ENCODE measurements at regions of chr9 and their contacts with region 1.

Region 1: GRCh38 chr9:131423171-131423581 is 29.3 kb downstream of the PRRC2B start:
- DNase-seq: peak; percentile 91
- H3K4me3 ChIP-seq: no peak overlapping the region
- H3K27ac ChIP-seq: peak overlapping the region; percentile 89
- H3K4me1 ChIP-seq: peaks cover 42% of the 10 kb centered on the region
- H3K27me3 ChIP-seq: no peaks in the 10 kb centered on the region
- CTCF ChIP-seq: no peak
- POLR2A ChIP-seq: no peak

Region 2: GRCh38 chr9:130073373-130073772 is 1349.8 kb before region 1 on chr9:
- CTCF ChIA-PET with region 1: no interaction called
- POLR2A ChIA-PET with region 1: no interaction called
- dilution Hi-C with region 1: no loop called
- intact Hi-C with region 1: no loop called
- DNase-seq: peak; percentile 94
- H3K4me3 ChIP-seq: no peak overlapping the region
- H3K27ac ChIP-seq: peak overlapping the region; percentile 88
- H3K4me1 ChIP-seq: peaks cover 33% of the 10 kb centered on the region
- H3K27me3 ChIP-seq: no peaks in the 10 kb centered on the region
- CTCF ChIP-seq: no peak
- POLR2A ChIP-seq: no peak

Region 3: GRCh38 chr9:131407717-131408195 is 15.4 kb before region 1 on chr9:
- CTCF ChIA-PET with region 1: interaction called, 10 read pairs
- POLR2A ChIA-PET with region 1: no interaction called
- dilution Hi-C with region 1: no loop called
- intact Hi-C with region 1: loop called (anchors 1 kb)
- DNase-seq: peak; percentile 63
- H3K4me3 ChIP-seq: no peak overlapping the region
- H3K27ac ChIP-seq: peak overlapping the region; percentile 33
- H3K4me1 ChIP-seq: peaks cover 46% of the 10 kb centered on the region
- H3K27me3 ChIP-seq: no peaks in the 10 kb centered on the region
- CTCF ChIP-seq: peak; percentile 22 to 35
- POLR2A ChIP-seq: no peak

Region 4: GRCh38 chr9:131442351-131442750 is 19.2 kb after region 1 on chr9:
- CTCF ChIA-PET with region 1: no interaction called
- POLR2A ChIA-PET with region 1: no interaction called
- dilution Hi-C with region 1: no loop called
- intact Hi-C with region 1: no loop called
- DNase-seq: no peak
- H3K4me3 ChIP-seq: no peak overlapping the region
- H3K27ac ChIP-seq: no peak overlapping the region
- H3K4me1 ChIP-seq: no peaks in the 10 kb centered on the region
- H3K27me3 ChIP-seq: no peaks in the 10 kb centered on the region
- CTCF ChIP-seq: no peak
- POLR2A ChIP-seq: no peak